ENCODE measurements at regions of chr1 and their contacts with region 1.

Region 1: DNA sequence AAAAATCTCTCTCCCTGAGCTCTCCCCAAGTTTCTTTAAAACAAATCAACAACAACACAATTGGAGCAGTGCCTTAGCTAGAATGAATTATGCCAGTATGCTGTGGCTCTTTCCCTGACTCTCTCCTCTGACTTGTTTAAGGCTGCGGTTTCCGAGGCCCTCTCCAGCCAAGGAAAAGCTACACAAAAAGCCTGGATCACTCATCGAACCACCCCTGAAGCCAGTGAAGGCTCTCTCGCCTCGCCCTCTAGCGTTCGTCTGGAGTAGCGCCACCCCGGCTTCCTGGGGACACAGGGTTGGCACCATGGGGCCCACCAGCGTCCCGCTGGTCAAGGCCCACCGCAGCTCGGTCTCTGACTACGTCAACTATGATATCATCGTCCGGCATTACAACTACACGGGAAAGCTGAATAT is 1.9 kb downstream of the S1PR1 start:
- DNase-seq: peak; percentile 78
- ATAC-seq: peak; percentile 28
- H3K4me3 Mint-ChIP-seq: peak overlapping the region; percentile 98
- H3K27ac Mint-ChIP-seq: peak overlapping the region; percentile 98
- H3K4me1 Mint-ChIP-seq: peaks cover 70% of the 10 kb centered on the region
- H3K27me3 Mint-ChIP-seq: no peaks in the 10 kb centered on the region
- CTCF ChIP-seq: peak; percentile 58

Region 2: DNA sequence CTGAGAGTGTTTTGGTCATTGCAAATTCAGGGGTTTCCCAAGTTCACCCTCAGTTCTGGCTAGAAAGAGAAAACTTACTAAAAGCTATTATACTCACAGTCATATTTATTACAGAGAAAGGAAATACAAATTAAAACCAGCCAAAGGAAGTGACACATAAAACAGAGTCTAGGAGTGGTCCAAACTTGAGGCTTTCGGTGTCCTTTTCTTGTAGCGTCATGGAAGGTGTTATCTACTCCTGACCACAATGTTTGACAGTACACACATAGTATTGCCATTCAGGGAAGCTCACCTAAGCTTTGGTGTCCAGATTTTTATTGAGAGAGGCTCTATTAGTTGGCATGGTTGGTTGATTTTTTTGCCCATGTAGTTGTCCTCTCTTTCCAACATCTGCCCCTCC is 1209.9 kb before region 1 on chr1:
- CTCF ChIA-PET with region 1: no interaction called
- POLR2A ChIA-PET with region 1: no interaction called
- intact Hi-C with region 1: no loop called
- DNase-seq: no peak
- ATAC-seq: no peak
- H3K4me3 Mint-ChIP-seq: no peak overlapping the region
- H3K27ac Mint-ChIP-seq: no peak overlapping the region
- H3K4me1 Mint-ChIP-seq: no peaks in the 10 kb centered on the region
- H3K27me3 Mint-ChIP-seq: no peaks in the 10 kb centered on the region
- CTCF ChIP-seq: no peak

Region 3: GRCh38 chr1:100671601-100672000 is 567.1 kb before region 1 on chr1:
- CTCF ChIA-PET with region 1: no interaction called
- POLR2A ChIA-PET with region 1: no interaction called
- intact Hi-C with region 1: no loop called
- DNase-seq: no peak
- ATAC-seq: no peak
- H3K4me3 Mint-ChIP-seq: no peak overlapping the region
- H3K27ac Mint-ChIP-seq: no peak overlapping the region
- H3K4me1 Mint-ChIP-seq: no peaks in the 10 kb centered on the region
- H3K27me3 Mint-ChIP-seq: peaks cover 7% of the 10 kb centered on the region
- CTCF ChIP-seq: no peak

Region 4: DNA sequence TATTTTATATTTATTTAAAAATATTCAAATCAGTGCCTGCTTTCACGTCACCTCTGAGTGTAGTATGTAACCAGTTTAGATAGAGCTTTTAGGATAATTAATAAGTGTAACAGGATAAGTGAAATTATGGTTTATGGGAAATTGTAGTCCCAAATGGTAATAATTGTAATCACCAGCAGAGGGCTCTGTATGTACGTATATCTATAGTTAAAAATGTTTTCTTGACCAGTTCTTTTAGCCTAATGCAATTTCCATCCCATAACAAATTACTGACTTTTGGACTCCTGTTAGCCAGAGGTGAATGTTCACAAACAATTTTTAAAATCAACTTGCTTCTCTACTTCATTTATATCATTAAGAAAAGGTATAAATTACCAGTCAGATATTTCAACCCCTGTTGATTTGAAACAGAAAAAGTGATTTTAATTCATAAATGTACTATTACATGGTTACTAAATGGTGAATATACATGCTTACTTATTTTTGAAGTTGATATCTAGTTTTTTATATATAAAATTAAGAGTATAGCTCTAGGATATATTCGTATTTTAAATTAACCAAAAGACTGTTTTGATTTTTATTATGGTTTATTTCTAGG is 317.5 kb before region 1 on chr1:
- CTCF ChIA-PET with region 1: interaction called, 25 read pairs
- POLR2A ChIA-PET with region 1: interaction called, 6 read pairs
- intact Hi-C with region 1: loop called (anchors 1 kb)
- DNase-seq: no peak
- ATAC-seq: no peak
- H3K4me3 Mint-ChIP-seq: no peak overlapping the region
- H3K27ac Mint-ChIP-seq: no peak overlapping the region
- H3K4me1 Mint-ChIP-seq: peaks cover 24% of the 10 kb centered on the region
- H3K27me3 Mint-ChIP-seq: no peaks in the 10 kb centered on the region
- CTCF ChIP-seq: peak; percentile 98

Region 5: GRCh38 chr1:101112051-101112780 is 126.5 kb before region 1 on chr1:
- CTCF ChIA-PET with region 1: interaction called, 8 read pairs
- POLR2A ChIA-PET with region 1: interaction called, 35 read pairs
- intact Hi-C with region 1: loop called (anchors 1 kb)
- DNase-seq: peak; percentile 32
- ATAC-seq: peak; percentile 96
- H3K4me3 Mint-ChIP-seq: peak overlapping the region; percentile 57
- H3K27ac Mint-ChIP-seq: peak overlapping the region; percentile 93
- H3K4me1 Mint-ChIP-seq: peaks cover 40% of the 10 kb centered on the region
- H3K27me3 Mint-ChIP-seq: no peaks in the 10 kb centered on the region
- CTCF ChIP-seq: no peak

Region 6: DNA sequence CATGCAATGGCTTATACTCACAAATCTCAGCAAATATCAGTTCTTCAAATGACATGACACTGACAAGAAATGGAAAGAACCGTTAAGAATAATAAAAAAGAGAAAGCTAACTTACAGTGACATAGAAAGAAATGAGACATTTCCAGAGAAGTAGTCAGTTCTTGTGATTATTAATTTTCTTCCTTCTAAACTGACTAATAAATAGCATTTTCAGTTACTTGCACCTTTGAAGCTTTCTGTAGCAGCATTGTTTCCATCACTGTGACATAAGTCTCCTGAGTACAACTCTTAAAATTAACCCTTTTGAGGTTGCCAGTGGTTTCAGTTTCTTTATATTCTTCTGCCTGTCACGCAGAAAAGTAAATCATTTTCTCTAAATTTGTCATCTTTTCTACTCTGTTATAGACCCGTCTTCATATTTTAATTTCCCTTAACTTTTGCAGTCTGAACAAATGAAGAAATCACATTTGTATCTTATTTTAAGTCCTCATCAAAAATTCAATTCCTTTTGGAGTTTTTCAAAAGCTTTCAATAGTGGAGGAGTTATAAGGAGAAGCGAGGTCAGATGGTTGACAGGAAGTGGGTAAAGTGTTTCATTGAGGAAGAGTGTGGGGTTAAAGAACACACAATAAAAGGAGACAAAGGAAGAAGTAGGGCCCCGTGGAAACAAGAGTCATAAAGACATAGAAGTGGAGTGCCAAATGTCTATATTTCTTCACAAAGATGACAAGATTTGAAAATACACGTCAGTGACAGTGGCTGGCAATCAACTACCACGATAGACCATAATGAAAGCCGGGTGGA is 59.8 kb before region 1 on chr1:
- CTCF ChIA-PET with region 1: interaction called, 6 read pairs
- POLR2A ChIA-PET with region 1: interaction called, 15 read pairs
- intact Hi-C with region 1: loop called (anchors 2 kb)
- DNase-seq: no peak
- ATAC-seq: peak; percentile 66
- H3K4me3 Mint-ChIP-seq: peak overlapping the region; percentile 53
- H3K27ac Mint-ChIP-seq: peak overlapping the region; percentile 54
- H3K4me1 Mint-ChIP-seq: peaks cover 19% of the 10 kb centered on the region
- H3K27me3 Mint-ChIP-seq: no peaks in the 10 kb centered on the region
- CTCF ChIP-seq: no peak

Region 7: GRCh38 chr1:101282314-101283038 is 43.8 kb after region 1 on chr1:
- CTCF ChIA-PET with region 1: interaction called, 58 read pairs
- POLR2A ChIA-PET with region 1: interaction called, 24 read pairs
- intact Hi-C with region 1: no loop called
- DNase-seq: no peak
- ATAC-seq: no peak
- H3K4me3 Mint-ChIP-seq: no peak overlapping the region
- H3K27ac Mint-ChIP-seq: no peak overlapping the region
- H3K4me1 Mint-ChIP-seq: peaks cover 24% of the 10 kb centered on the region
- H3K27me3 Mint-ChIP-seq: no peaks in the 10 kb centered on the region
- CTCF ChIP-seq: no peak

Region 8: GRCh38 chr1:101309334-101310311 is 70.9 kb after region 1 on chr1:
- CTCF ChIA-PET with region 1: interaction called, 5 read pairs
- POLR2A ChIA-PET with region 1: interaction called, 33 read pairs
- intact Hi-C with region 1: no loop called
- DNase-seq: peak; percentile 57
- ATAC-seq: peak; percentile 75
- H3K4me3 Mint-ChIP-seq: peak overlapping the region; percentile 82
- H3K27ac Mint-ChIP-seq: peak overlapping the region; percentile 94
- H3K4me1 Mint-ChIP-seq: peaks cover 78% of the 10 kb centered on the region
- H3K27me3 Mint-ChIP-seq: no peaks in the 10 kb centered on the region
- CTCF ChIP-seq: peak; percentile 77

Measured in activated B cell treated with CpG ODN at 0.5 μM for 24 hours (primary cell).